ENCODE measurements at regions of chr3 and their contacts with region 1.

Region 1: GRCh38 chr3:122679085-122679881 is 1.4 kb upstream of the PARP14 start:
- DNase-seq: peak; percentile 83 to 86
- H3K4me3 ChIP-seq: peak overlapping the region in 1 of 3 donors; percentile 88
- H3K27ac ChIP-seq: peak overlapping the region; percentile 95 to 99 (median 98)
- H3K4me1 ChIP-seq: peaks cover 13 to 31% of the 10 kb centered on the region in 2 donors
- H3K27me3 ChIP-seq: no peaks in the 10 kb centered on the region
- CTCF ChIP-seq: peak; percentile 51 to 92 (median 84)
- POLR2A ChIP-seq: no peak

Region 2: DNA sequence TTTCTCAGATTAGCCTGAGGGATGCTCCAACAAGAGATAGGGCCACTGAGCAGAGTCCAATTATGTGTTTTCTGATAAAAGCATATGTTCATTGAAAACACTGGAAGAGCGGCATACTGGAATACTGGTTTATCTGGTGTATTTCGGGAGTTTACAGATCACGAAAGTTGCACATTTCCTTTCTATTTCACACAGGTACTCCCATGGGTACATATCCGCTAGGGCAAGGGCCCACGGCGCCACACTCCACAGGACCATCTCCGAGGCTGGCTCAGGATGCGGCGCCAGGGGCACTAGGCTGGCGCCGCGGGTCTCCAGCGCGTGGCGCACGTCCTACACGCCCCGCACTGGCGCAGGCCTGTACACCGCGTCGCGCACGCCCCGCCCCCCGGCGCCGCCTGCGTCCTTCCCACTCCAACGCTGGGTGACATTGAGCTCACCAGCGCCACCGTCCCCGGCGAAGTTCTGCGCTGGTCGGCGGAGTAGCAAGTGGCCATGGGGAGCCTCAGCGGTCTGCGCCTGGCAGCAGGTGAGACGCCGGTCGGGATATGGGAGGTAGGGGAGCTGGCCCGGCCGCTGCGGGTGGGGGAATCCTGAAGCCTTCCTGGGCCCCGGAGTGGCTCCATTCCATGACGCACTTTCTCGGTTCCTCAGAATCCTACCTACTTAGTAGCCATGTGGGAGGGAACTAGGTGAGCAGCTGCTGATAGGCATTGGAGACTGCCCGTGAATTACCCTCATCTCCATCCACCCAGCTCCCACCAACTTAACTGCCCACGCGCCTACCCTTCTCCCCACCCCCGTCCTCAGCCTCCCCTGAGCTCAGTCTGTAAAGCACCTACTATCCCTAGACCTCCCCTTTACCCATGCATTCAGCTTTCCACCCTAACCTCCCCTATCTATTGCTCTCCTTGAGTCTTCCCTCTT is 295.2 kb before region 1 on chr3 and contains the start of gene FAM162A:
- intact Hi-C with region 1: loop called (anchors 10 kb)
- DNase-seq: peak; percentile 95
- H3K4me3 ChIP-seq: peak within 1 kb of the TSS; percentile 57 to 69 (median 60)
- H3K27ac ChIP-seq: peak within 1 kb of the TSS; percentile 84 to 91 (median 86)
- H3K4me1 ChIP-seq: peaks cover 4 to 7% of the 10 kb centered on the region in 2 donors
- H3K27me3 ChIP-seq: no peaks in the 10 kb centered on the region
- CTCF ChIP-seq: peak in 5 of 6 experiments; percentile 31 to 63 (median 52)
- POLR2A ChIP-seq: peak; percentile 51 to 99
- total RNA-seq, gene FAM162A: 32.0 to 41.0 (median 34.5) TPM

Region 3: GRCh38 chr3:122415720-122416654 is 263.3 kb before region 1 on chr3 and contains the start of gene WDR5B:
- intact Hi-C with region 1: loop called (anchors 10 kb)
- DNase-seq: peak; percentile 96 to 98
- H3K4me3 ChIP-seq: peak within 1 kb of the TSS; percentile 6 to 69 (median 63)
- H3K27ac ChIP-seq: peak within 1 kb of the TSS; percentile 80 to 92 (median 88)
- H3K4me1 ChIP-seq: peaks cover 11 to 21% of the 10 kb centered on the region in 2 donors
- H3K27me3 ChIP-seq: no peaks in the 10 kb centered on the region
- CTCF ChIP-seq: peak in 2 of 6 experiments; percentile 23 to 29
- POLR2A ChIP-seq: peak; percentile 26 to 91
- total RNA-seq, gene WDR5B: 8.6 to 10.7 (median 9.3) TPM

Region 4: DNA sequence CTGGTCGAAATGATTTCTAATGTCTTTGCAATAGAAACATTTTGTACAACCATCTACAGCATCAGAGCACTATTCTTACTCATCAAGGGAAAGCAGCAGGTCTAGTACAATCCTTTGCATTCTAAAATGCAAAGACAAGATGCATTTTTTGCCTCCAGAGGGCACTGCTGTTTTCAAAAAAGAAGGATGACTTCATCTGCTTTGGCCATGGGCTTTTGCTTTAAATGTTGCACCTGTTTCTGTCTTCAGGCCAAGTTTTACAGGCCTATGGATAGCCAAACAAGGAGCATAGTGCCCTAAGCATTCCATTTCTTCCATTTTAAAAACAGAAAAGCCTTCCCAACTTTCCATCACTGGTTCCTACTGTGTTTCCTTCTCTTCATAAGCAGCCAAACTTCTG is 118.6 kb before region 1 on chr3:
- intact Hi-C with region 1: loop called (anchors 2 kb)
- DNase-seq: peak; percentile 53 to 55
- H3K4me3 ChIP-seq: no peak overlapping the region
- H3K27ac ChIP-seq: no peak overlapping the region
- H3K4me1 ChIP-seq: peaks cover 11 to 26% of the 10 kb centered on the region in 2 donors
- H3K27me3 ChIP-seq: no peaks in the 10 kb centered on the region
- CTCF ChIP-seq: peak; percentile 14 to 79 (median 56)
- POLR2A ChIP-seq: no peak

Region 5: GRCh38 chr3:122572940-122573412 is 106.3 kb before region 1 on chr3:
- intact Hi-C with region 1: no loop called
- DNase-seq: peak in 1 of 2 donors; percentile 15
- H3K4me3 ChIP-seq: no peak overlapping the region
- H3K27ac ChIP-seq: no peak overlapping the region
- H3K4me1 ChIP-seq: peaks cover 17 to 28% of the 10 kb centered on the region in 2 donors
- H3K27me3 ChIP-seq: no peaks in the 10 kb centered on the region
- CTCF ChIP-seq: no peak
- POLR2A ChIP-seq: no peak

Measured in thyroid gland (tissue), 4 donors.